ENCODE measurements at regions of chr2 and their contacts with region 1.

Region 1: DNA sequence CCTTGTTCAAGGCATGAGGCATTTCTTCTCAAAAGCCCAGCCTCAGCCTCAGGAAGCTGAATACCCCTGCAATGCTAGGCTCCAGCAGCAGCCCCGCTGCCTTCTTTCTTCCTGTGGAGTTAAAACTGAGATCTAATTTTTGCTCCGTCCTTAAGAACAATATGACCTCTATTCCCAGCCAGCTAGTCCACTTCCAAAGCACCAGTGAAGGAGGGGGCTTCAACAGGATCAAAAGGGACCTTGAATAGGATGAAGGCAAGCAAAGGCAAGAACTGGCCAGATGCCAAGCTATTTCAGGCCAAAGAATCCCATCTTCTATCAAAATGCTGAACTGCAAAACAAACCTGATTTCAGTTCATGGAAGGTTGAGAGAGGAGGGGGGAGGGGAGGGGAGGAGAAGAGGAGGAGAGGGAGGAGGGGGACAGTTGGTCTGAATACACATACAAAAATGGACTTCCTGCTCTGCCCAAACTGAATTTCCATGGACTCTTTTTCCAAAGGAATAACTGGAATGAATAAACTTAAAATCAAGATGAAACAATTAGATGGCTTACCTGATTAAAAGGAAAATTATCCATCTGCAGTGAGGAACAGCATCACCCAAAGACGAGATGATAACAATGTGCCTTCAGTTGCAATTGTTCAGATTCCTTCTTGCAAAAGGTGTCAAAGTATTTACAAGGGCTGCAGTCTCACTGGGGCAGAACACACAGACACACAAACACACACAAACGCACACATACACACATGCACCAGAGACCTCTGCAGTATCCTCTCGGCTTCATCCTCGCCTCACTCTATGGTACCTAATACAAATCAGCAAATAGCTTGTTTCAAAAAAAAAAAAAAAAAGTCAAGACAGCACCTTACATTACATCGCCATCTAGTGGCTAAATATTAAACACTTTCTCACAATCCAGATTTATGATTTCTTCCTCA is at the start of gene SCN1A:
- DNase-seq: no peak
- H3K4me3 Mint-ChIP-seq: no peak within 1 kb of the TSS
- H3K27ac Mint-ChIP-seq: no peak within 1 kb of the TSS
- H3K4me1 Mint-ChIP-seq: peaks cover 20% of the 10 kb centered on the region
- H3K27me3 Mint-ChIP-seq: no peaks in the 10 kb centered on the region
- CTCF ChIP-seq: no peak
- total RNA-seq, gene SCN1A: not detected in 2 replicates

Region 2: DNA sequence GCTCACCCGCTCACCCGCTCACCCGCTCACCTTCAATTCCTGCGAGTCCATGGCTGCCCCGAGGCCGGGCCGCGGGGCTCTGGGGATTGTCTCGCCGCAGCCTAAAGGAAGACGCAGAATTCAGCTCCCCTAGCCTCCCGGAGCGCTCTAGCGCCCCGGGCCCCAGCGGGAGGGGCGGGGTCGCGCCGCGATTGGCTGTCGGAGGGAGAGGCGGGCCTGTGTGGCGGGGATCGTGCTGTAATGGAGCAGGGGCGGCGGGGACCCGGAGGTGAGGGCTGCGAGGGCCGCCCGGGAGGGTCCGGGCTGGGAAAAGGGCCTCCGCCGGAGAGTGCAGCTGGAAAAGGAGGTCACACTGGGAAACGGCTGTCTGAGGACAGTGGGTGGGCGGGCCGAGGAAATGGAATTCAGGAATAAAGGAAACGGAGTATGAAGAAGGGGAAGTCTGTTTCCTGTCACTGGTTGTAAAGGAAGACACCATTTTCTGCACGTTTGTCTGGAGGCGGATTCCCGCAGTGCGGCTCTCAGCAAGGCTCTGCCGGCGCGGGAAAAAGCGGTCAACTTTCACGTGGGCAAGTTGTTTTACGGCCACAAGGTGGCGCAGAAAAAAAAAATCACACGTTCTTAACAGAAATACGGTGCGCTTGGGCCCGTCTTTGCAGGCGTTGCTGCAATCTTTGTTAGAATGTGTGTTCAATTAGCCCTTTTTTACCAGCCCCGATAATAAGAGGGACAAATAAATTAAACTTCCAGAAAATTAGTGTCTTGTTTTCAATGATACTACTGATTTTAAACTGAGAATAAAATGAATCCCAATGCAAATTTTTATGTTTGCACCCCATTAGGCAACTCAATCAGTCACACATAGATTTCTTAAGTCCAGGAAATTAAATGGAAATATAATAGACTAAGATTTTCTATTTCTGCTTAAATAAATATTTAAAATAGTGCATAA is 173.6 kb before region 1 on chr2 and contains the start of gene TTC21B:
- CTCF ChIA-PET with region 1: interaction called, 9 read pairs
- intact Hi-C with region 1: loop called (anchors 1 kb)
- DNase-seq: peak; percentile 97
- H3K4me3 Mint-ChIP-seq: no peak within 1 kb of the TSS
- H3K27ac Mint-ChIP-seq: no peak within 1 kb of the TSS
- H3K4me1 Mint-ChIP-seq: no peaks in the 10 kb centered on the region
- H3K27me3 Mint-ChIP-seq: no peaks in the 10 kb centered on the region
- CTCF ChIP-seq: peak; percentile 80
- total RNA-seq, gene TTC21B: 12.0 and 14.7 TPM in 2 replicates

Region 3: GRCh38 chr2:166057370-166058164 is 69.9 kb before region 1 on chr2:
- CTCF ChIA-PET with region 1: interaction called, 15 read pairs
- intact Hi-C with region 1: loop called (anchors 1 kb)
- DNase-seq: no peak
- H3K4me3 Mint-ChIP-seq: no peak overlapping the region
- H3K27ac Mint-ChIP-seq: no peak overlapping the region
- H3K4me1 Mint-ChIP-seq: no peaks in the 10 kb centered on the region
- H3K27me3 Mint-ChIP-seq: no peaks in the 10 kb centered on the region
- CTCF ChIP-seq: peak; percentile 40

Region 4: DNA sequence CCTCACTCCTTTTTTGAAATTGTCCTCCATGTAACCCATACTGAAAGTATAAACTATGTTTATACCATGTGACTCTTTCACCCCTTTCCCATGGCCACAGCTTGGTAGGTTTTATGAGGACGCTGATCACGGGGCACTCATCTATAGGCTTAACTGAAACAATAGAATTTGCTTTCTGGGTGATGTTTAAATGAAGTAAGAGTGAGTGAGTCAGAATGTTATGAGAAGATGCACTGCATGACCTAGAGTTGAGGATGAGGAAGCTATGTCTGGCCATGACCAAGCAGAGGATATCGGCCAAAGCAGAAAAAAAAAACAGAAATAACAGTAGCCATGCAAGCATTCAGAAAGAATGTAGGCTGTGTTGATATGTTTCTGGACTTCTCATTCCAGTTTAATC is 34.6 kb before region 1 on chr2:
- CTCF ChIA-PET with region 1: no interaction called
- intact Hi-C with region 1: no loop called
- DNase-seq: no peak
- H3K4me3 Mint-ChIP-seq: no peak overlapping the region
- H3K27ac Mint-ChIP-seq: no peak overlapping the region
- H3K4me1 Mint-ChIP-seq: no peaks in the 10 kb centered on the region
- H3K27me3 Mint-ChIP-seq: no peaks in the 10 kb centered on the region
- CTCF ChIP-seq: no peak

Region 5: DNA sequence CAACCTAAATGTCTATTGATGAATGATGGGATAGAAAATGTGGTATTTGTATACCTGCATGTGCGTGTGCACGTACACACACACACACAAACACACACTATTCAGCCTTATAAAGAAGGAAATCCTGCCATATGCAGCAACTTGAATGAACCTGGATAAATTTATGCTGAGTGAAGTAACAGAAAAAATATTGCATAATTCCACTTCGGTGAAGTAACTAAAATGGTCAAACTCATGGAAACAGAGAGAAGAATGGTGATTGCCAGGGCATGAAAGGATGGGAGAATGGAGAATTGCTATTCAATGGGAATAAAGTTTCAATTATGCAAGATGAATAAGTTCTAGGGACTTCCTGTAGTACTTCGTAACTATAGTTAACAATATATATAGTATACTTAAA is 95.8 kb after region 1 on chr2:
- CTCF ChIA-PET with region 1: no interaction called
- intact Hi-C with region 1: no loop called
- DNase-seq: no peak
- H3K4me3 Mint-ChIP-seq: no peak overlapping the region
- H3K27ac Mint-ChIP-seq: no peak overlapping the region
- H3K4me1 Mint-ChIP-seq: no peaks in the 10 kb centered on the region
- H3K27me3 Mint-ChIP-seq: no peaks in the 10 kb centered on the region
- CTCF ChIP-seq: no peak

Measured in Calu3 (cell line).